A673 (cell line): ENCODE measurements at regions of chr11 and their contacts with region 1.

Region 1: DNA sequence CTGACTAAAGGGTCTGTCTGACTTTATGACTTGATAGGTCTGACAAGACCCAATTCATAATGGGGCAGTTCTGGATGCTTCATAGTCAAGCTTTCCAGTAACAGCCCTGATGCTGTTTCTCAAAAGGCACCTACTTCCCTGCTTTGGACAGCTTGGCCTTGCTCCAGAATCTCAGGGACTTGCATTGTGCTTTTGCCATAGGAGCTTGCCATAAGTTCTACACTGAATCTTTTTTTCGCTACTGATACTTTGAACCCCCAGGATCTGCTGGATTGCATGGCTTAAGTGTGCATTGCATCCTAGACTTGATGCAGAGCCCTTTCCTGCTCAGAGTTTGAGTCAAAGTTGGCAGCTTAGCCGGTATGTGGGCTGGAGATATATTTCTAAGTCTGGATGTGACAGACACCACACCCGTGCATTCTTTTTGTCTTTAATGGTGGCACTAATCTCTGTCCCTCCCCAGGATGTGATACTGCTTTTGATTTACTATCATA is 17.0 kb upstream of the SLC3A2 start:
- DNase-seq: no peak
- H3K4me3 ChIP-seq: no peak overlapping the region
- H3K27ac ChIP-seq: peak overlapping the region; percentile 33
- H3K4me1 ChIP-seq: peaks cover 38% of the 10 kb centered on the region
- H3K27me3 ChIP-seq: no peaks in the 10 kb centered on the region
- CTCF ChIP-seq: no peak

Region 2: GRCh38 chr11:62370743-62371440 is 492.8 kb before region 1 on chr11:
- CTCF ChIA-PET with region 1: interaction called, 14 read pairs
- POLR2A ChIA-PET with region 1: no interaction called
- intact Hi-C with region 1: no loop called
- DNase-seq: no peak
- H3K4me3 ChIP-seq: no peak overlapping the region
- H3K27ac ChIP-seq: no peak overlapping the region
- H3K4me1 ChIP-seq: no peaks in the 10 kb centered on the region
- H3K27me3 ChIP-seq: no peaks in the 10 kb centered on the region
- CTCF ChIP-seq: no peak

Region 3: GRCh38 chr11:62823677-62824076 is 40.1 kb before region 1 on chr11:
- CTCF ChIA-PET with region 1: no interaction called
- POLR2A ChIA-PET with region 1: no interaction called
- intact Hi-C with region 1: no loop called
- DNase-seq: no peak
- H3K4me3 ChIP-seq: no peak overlapping the region
- H3K27ac ChIP-seq: no peak overlapping the region
- H3K4me1 ChIP-seq: no peaks in the 10 kb centered on the region
- H3K27me3 ChIP-seq: no peaks in the 10 kb centered on the region
- CTCF ChIP-seq: no peak

Region 4: DNA sequence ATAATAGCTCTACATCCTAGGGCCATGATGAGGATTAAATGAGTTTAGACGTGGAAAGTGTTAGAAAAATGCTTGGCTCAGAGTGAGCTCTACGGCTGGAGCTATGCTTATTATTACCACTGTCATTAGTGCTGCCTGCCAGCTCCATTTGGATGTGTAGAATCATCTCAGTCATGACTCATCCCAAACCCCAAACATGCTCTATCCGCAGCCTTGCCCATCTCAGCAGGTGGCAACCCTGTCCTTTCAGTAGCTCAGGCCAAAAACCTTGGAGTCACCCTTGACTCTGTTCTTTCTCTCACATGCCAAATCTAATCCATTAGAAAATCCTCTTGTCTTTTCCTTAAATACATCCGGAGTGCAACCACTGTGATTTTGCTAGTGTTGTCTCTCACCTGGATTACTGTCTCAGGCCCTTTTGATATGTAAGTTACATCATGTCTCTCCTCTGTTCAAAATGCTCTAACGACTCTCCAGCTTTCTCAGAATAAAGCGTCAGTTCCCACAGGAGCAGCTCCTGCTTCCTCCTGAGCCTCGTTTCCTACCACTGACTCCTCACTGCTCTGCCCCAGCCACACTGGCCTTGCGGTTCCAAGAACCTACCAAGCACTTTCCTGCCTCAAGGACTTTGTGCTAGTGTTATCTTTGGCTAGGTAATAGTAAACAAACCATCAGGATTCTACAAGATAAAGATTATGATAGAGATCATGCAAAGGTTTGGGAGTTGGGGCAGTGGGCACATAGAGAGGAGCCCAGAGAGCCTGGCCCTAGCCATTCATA is 68.0 kb after region 1 on chr11:
- CTCF ChIA-PET with region 1: no interaction called
- POLR2A ChIA-PET with region 1: no interaction called
- intact Hi-C with region 1: no loop called
- DNase-seq: peak; percentile 70
- H3K4me3 ChIP-seq: no peak overlapping the region
- H3K27ac ChIP-seq: no peak overlapping the region
- H3K4me1 ChIP-seq: peaks cover 3% of the 10 kb centered on the region
- H3K27me3 ChIP-seq: no peaks in the 10 kb centered on the region
- CTCF ChIP-seq: no peak